ENCODE measurements at regions of chr13 and their contacts with region 1.

Region 1: DNA sequence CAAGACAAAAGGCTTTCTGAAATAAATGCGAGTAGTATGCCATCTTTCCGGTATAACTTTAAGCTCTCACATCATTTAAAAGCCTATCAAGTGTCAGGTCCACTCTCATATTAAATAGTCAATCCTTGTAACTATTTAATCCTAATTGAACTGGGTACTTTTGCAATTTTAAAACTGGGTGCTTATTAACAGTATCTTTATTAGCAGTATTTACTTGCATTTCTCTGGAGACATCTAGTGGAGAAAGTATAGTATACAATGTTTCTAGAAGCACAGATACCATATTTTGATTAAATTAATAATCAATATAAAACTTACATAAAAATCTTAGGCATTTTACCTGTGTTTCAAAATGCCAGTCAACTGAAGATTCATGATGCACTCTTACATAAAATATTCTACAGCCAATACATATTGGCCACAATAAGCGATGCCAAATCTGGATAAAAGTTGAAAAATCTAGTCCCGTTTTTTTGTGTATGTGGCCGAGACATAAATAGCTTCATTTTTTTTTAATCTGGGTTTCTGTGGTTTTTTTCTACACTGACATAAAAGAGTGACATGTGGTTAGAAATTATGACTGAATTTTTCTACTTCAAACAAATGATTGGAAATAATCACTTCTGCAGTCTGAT is 4.3 kb upstream of the POSTN start:
- DNase-seq: peak; percentile 47
- ATAC-seq: peak; percentile 67
- H3K4me3 ChIP-seq: no peak overlapping the region
- H3K27ac ChIP-seq: no peak overlapping the region
- H3K4me1 ChIP-seq: peaks cover 5% of the 10 kb centered on the region
- H3K27me3 ChIP-seq: no peaks in the 10 kb centered on the region
- CTCF ChIP-seq: peak; percentile 73
- POLR2A ChIP-seq: no peak
- RAD21 ChIP-seq: peak; percentile 79

Region 2: DNA sequence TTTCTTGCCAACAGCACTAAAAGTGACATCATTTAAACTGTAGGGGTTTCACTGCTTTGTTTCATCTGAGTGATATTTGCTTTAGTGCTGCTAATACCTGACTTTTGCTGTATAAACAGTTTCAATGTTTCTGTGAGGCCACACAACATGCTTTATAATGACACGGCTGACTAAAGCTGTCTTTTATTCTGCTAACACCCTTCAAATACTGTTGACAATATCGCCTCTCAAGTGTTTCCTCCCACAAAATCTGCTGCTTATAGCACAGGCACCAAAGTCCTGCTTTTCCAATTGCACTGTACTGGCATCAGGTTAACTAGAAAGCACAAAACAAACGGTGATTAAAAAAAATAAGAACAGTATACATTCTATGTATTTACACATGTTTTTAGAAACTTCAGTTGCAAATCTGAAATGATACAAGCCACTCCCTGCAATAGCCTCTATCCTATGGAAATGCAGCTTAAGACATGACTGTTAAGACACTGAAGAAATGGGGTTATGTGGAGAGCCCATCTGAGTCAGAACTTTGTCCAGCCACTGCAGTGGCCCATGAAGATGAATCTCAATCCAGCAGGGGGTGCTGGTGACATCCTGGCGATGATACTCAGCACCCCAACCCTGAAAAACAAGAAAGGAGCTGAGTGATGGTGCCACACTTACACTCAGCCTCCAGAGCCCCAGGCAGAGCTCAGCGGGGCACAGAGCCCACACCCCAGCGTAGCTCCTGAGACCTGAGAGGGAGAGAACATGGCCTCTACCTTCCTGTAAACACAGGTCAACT is 754.5 kb before region 1 on chr13:
- CTCF ChIA-PET with region 1: no interaction called
- POLR2A ChIA-PET with region 1: no interaction called
- dilution Hi-C with region 1: no loop called
- in situ Hi-C with region 1: loop called (anchors 25 kb)
- intact Hi-C with region 1: no loop called
- DNase-seq: peak; percentile 19
- ATAC-seq: peak; percentile 79
- H3K4me3 ChIP-seq: no peak overlapping the region
- H3K27ac ChIP-seq: no peak overlapping the region
- H3K4me1 ChIP-seq: no peaks in the 10 kb centered on the region
- H3K27me3 ChIP-seq: no peaks in the 10 kb centered on the region
- CTCF ChIP-seq: peak; percentile 27
- POLR2A ChIP-seq: no peak
- RAD21 ChIP-seq: no peak

Region 3: GRCh38 chr13:37074703-37075102 is 528.2 kb before region 1 on chr13:
- CTCF ChIA-PET with region 1: no interaction called
- POLR2A ChIA-PET with region 1: no interaction called
- dilution Hi-C with region 1: no loop called
- in situ Hi-C with region 1: no loop called
- intact Hi-C with region 1: loop called (anchors 1 kb)
- DNase-seq: peak; percentile 49
- ATAC-seq: peak; percentile 77
- H3K4me3 ChIP-seq: no peak overlapping the region
- H3K27ac ChIP-seq: no peak overlapping the region
- H3K4me1 ChIP-seq: 0 out of 2 replicates have a peak, but pooled peaks cover 3% of the 10 kb centered on the region
- H3K27me3 ChIP-seq: no peaks in the 10 kb centered on the region
- CTCF ChIP-seq: peak; percentile 54
- POLR2A ChIP-seq: no peak
- RAD21 ChIP-seq: peak; percentile 52

Region 4: GRCh38 chr13:37109051-37109678 is 493.7 kb before region 1 on chr13:
- CTCF ChIA-PET with region 1: interaction called, 5 read pairs
- POLR2A ChIA-PET with region 1: no interaction called
- dilution Hi-C with region 1: no loop called
- in situ Hi-C with region 1: loop called (anchors 5 kb)
- intact Hi-C with region 1: loop called (anchors 1 kb)
- DNase-seq: peak; percentile 62
- ATAC-seq: peak; percentile 67
- H3K4me3 ChIP-seq: no peak overlapping the region
- H3K27ac ChIP-seq: no peak overlapping the region
- H3K4me1 ChIP-seq: no peaks in the 10 kb centered on the region
- H3K27me3 ChIP-seq: no peaks in the 10 kb centered on the region
- CTCF ChIP-seq: peak; percentile 89
- POLR2A ChIP-seq: 0 out of 2 replicates have a peak, but pooled peaks have one; percentile 56
- RAD21 ChIP-seq: peak; percentile 96

Region 5: GRCh38 chr13:37225414-37226070 is 377.3 kb before region 1 on chr13:
- CTCF ChIA-PET with region 1: no interaction called
- POLR2A ChIA-PET with region 1: no interaction called
- dilution Hi-C with region 1: no loop called
- in situ Hi-C with region 1: no loop called
- intact Hi-C with region 1: loop called (anchors 5 kb)
- DNase-seq: peak; percentile 62
- ATAC-seq: peak; percentile 85
- H3K4me3 ChIP-seq: no peak overlapping the region
- H3K27ac ChIP-seq: peak overlapping the region; percentile 37
- H3K4me1 ChIP-seq: peaks cover 3% of the 10 kb centered on the region
- H3K27me3 ChIP-seq: no peaks in the 10 kb centered on the region
- CTCF ChIP-seq: no peak
- POLR2A ChIP-seq: no peak
- RAD21 ChIP-seq: no peak